Panc1 (cell line): ENCODE measurements at regions of chr16 and their contacts with region 1.

Region 1: GRCh38 chr16:19375561-19376158 is 42.0 kb upstream of the TMC5 start:
- DNase-seq: peak; percentile 55
- ATAC-seq: peak; percentile 89
- H3K4me3 ChIP-seq: no peak overlapping the region
- H3K27ac ChIP-seq: no peak overlapping the region
- H3K4me1 ChIP-seq: no peaks in the 10 kb centered on the region
- H3K27me3 ChIP-seq: no peaks in the 10 kb centered on the region
- CTCF ChIP-seq: peak; percentile 92

Region 2: DNA sequence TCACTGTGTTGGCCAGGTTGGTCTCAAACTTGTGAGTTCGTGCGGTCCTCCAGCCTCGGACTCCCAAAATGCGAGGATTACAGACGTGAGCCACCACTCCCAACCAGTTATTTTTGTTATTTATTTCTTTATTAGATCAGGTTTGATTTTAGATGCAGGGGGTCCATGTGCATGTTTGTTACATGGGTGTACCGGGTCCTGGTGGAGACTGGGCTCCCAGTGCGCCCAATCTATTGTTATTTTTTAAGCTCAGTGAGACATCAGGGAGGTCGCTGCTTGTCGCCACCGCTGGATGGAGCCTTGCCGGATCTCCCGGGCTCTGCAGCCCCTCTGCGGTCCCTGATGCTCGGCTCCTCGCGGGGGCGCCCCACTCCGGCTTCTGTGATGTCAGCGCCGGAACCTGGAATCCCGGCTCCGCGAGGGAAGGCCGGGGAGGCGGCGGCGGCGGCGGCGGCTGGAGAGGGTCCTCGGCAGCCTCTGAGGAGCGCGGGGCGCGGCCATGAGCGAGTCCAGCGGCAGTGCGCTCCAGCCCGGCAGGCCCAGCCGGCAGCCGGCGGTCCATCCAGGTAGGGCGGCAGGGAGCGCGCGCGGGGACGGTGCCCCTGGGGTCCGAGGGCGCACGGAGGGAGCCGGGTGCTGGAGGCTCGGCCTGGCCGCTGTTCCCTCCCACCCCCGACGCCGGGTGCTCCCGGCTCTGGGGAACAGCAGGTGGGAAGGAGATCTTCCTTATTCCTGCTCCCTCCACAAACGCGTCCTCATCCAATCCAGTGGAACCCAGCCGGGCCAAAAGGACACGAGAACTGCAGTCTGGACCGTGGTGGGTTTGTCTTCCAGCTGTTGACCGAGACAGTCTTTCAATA is 391.9 kb before region 1 on chr16 and contains the start of gene TMC7:
- CTCF ChIA-PET with region 1: no interaction called
- POLR2A ChIA-PET with region 1: no interaction called
- in situ Hi-C with region 1: no loop called
- intact Hi-C with region 1: loop called (anchors 10 kb)
- DNase-seq: peak; percentile 74
- ATAC-seq: peak; percentile 99
- H3K4me3 ChIP-seq: peak within 1 kb of the TSS; percentile 58 to 98
- H3K27ac ChIP-seq: peak within 1 kb of the TSS; percentile 87
- H3K4me1 ChIP-seq: peaks cover 6% of the 10 kb centered on the region; the same call in 1 of the 2 replicates
- H3K27me3 ChIP-seq: no peaks in the 10 kb centered on the region
- CTCF ChIP-seq: peak; percentile 100
- total RNA-seq, gene TMC7: 5.1 TPM

Region 3: GRCh38 chr16:19167710-19168370 is 207.8 kb before region 1 on chr16 and contains the start of gene SYT17:
- CTCF ChIA-PET with region 1: no interaction called
- POLR2A ChIA-PET with region 1: no interaction called
- in situ Hi-C with region 1: no loop called
- intact Hi-C with region 1: loop called (anchors 2 kb)
- DNase-seq: no peak
- ATAC-seq: peak; percentile 94
- H3K4me3 ChIP-seq: peak within 1 kb of the TSS; percentile 56 to 73
- H3K27ac ChIP-seq: no peak within 1 kb of the TSS
- H3K4me1 ChIP-seq: 0 out of 2 replicates have a peak, but pooled peaks cover 6% of the 10 kb centered on the region
- H3K27me3 ChIP-seq: no peaks in the 10 kb centered on the region; the same call in none of the 2 replicates
- CTCF ChIP-seq: peak; percentile 98
- total RNA-seq, gene SYT17: 5.4 TPM